ENCODE measurements at regions of chr9 and their contacts with region 1.

Region 1: GRCh38 chr9:91775011-91775707 is 174.9 kb downstream of the ROR2 start:
- DNase-seq: peak; percentile 53
- H3K4me3 Mint-ChIP-seq: no peak overlapping the region
- H3K27ac Mint-ChIP-seq: no peak overlapping the region
- H3K4me1 Mint-ChIP-seq: peaks cover 10% of the 10 kb centered on the region
- H3K27me3 Mint-ChIP-seq: peaks cover 18% of the 10 kb centered on the region

Region 2: GRCh38 chr9:91790917-91791316 is 15.8 kb after region 1 on chr9:
- intact Hi-C with region 1: no loop called
- DNase-seq: no peak
- H3K4me3 Mint-ChIP-seq: no peak overlapping the region
- H3K27ac Mint-ChIP-seq: no peak overlapping the region
- H3K4me1 Mint-ChIP-seq: peaks cover 6% of the 10 kb centered on the region
- H3K27me3 Mint-ChIP-seq: peaks cover 16% of the 10 kb centered on the region

Region 3: DNA sequence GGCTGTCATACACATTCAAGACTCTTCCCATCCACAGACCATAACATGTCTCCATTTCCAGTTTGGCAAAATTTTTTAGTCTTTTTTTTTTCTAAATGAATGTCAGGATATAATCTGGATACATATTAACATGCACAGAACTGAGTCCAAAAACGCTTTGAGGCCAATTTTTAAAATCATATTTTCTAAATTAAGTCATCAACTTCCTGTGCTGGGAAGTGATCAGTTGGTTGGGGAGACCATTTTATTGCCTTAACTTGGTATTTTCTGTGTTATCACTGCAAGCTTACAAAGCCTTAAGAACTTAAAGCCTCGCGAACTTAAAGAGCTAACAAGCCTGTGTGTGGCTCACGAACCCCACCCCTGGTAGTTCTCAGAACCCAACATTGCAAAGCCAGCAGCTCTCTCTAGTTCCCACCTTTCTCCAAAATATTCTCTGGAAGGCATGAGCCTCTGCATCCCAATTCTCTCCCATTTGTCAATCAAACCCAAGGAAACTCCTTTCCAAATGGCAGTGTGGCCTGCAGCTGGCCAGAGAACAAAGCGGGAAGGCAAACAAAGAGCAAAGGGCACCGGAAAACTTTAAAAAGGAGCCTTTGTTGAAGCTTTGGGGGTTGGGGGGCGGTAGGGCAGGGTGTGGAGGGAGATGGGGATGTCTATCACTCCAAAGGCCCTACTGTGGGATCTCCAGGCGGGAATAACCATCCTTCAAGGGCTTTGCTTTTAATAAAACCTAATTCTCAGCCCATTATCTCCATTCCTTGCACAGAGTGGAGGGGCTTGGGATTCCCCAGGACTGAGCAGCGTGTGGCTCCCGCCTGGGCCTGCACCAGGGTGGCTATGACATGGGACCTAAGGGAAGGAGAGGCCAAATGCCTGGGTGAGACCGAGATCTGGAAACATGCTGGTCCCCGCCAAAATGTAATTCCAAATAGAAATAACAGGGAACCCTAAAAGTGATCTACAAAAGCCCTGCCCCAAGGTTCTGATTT is 109.8 kb after region 1 on chr9:
- intact Hi-C with region 1: loop called (anchors 5 kb)
- DNase-seq: no peak
- H3K4me3 Mint-ChIP-seq: no peak overlapping the region
- H3K27ac Mint-ChIP-seq: no peak overlapping the region
- H3K4me1 Mint-ChIP-seq: no peaks in the 10 kb centered on the region
- H3K27me3 Mint-ChIP-seq: peaks cover 28% of the 10 kb centered on the region

Region 4: GRCh38 chr9:91978739-91979414 is 203.7 kb after region 1 on chr9:
- intact Hi-C with region 1: loop called (anchors 1 kb)
- DNase-seq: no peak
- H3K4me3 Mint-ChIP-seq: no peak overlapping the region
- H3K27ac Mint-ChIP-seq: no peak overlapping the region
- H3K4me1 Mint-ChIP-seq: no peaks in the 10 kb centered on the region
- H3K27me3 Mint-ChIP-seq: no peaks in the 10 kb centered on the region

Measured in activated T-helper 1 cell treated with anti-CD3 and anti-CD28 coated beads, Interleukin-12 subunit alpha, Interleukin-12 subunit beta, Interleukin-2, Interleukin-4 antibody, amounts not matched to agents 30 ng/mL and 10 ng/mL and 1 ng/mL, durations not matched to agents 14 hours and 24 hours and 36 hours (primary cell).